ENCODE measurements at regions of chr3 and their contacts with region 1.

Region 1: GRCh38 chr3:10758304-10759061 is 57.5 kb upstream of the SLC6A11 start:
- DNase-seq: no peak

Region 2: GRCh38 chr3:10883478-10884234 is 125.2 kb after region 1 on chr3:
- intact Hi-C with region 1: loop called (anchors 5 kb)
- DNase-seq: no peak

Region 3: DNA sequence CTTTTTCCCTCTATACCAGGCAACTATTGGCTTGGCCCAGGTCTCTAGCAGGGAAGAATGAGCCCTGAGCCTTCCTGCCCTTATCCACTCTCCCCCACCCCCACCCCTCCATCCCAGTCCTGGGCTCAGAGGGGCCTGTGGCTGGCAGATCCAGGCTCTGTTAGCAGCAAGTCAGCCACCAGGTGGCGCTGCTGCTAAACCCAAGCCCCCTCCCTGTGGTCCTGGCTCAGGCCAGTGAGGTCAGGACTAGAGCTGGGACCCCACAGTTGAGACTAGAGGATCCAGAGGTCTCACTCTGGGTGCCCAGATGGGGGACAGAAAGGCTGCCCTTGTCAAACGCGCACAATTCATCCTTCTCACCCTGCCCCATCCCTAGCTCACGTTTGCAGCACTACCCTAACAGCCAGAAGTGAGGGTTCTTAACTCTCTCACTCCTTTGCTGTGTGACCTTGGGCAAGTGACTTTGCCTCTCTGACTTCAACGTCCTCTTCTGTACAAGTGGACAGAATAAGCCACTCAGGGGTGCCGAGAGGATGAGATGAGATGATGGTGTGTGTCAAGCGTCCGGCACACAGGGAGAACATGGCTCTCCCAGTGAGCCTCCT is 187.3 kb after region 1 on chr3:
- intact Hi-C with region 1: loop called (anchors 5 kb)
- DNase-seq: peak; percentile 85

Measured in cardiac septum (tissue), 1 donor.